Activated naive CD4-positive, alpha-beta T cell treated with anti-CD3 and anti-CD28 coated beads for 36 hours (primary cell): ENCODE measurements at regions of chr12 and their contacts with region 1.

Region 1: DNA sequence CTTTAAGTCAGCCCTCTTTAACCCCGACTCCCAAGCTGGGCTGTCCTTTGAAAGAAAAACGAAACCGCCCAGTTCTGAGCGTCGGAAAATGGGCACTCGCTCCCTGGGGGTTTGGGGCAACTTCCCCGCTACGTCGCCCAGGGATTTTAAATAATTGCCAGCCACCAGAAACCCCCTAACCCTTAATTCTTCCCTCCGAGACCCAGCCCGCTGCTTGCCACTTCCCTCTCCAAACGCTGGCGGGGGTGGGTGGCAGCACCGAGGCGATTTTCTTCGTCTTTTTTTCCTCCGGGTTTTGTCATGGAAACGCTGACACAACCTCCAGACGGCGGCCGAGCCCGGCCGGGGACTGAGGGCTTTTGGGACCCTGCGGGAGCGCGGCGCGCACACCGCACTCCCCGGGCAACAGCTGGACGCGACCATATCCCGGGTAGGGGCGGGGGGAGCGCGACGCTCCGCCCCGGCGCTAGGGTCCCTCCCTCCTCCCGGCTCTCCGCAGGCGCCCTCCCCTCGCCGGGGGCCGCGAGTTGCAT is at the start of gene CHST11:
- DNase-seq: peak; percentile 86
- H3K4me3 Mint-ChIP-seq: peak within 1 kb of the TSS; percentile 97
- H3K27ac Mint-ChIP-seq: peak within 1 kb of the TSS; percentile 94
- H3K4me1 Mint-ChIP-seq: peaks cover 28% of the 10 kb centered on the region
- H3K27me3 Mint-ChIP-seq: peaks cover 2% of the 10 kb centered on the region
- total RNA-seq, gene CHST11: 39.3 to 45.3 TPM

Region 2: DNA sequence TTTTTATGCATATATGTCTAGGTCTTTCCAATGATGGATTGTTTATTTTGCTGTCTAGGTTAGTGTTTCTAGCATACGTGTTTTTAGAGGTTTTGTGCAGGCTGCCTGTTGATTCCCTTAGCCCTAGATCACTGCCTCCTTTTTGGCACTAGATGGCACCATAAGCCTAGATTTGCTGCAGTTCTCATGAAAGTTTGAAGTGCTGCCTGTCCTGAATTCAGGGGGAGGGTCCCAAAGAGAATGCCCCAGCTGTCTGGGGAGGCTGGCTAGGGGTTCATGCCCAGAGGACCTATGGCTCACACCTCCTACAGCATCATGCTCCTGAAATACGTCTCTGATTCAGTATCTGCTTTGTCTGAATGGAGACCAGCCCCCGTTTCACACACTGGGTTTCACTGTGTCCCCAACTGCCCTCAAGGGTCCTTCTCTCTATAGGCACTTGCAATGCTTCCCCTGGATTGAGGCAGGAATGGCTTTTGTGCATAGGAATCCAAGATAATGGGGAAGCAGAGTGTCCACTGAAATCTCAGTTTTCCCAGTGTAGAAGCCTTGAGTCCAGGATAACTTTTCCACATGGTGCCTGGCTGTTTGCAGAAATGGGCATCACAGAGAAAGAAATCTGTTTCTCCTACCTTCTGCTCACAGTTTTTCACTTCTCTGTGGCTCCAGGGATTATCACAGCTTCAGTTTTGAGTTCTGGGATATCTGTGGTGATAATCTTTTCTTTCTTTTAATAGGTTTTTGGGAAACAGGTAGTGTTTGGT is 255.1 kb before region 1 on chr12:
- CTCF ChIA-PET with region 1: no interaction called
- intact Hi-C with region 1: no loop called
- DNase-seq: peak; percentile 64
- H3K4me3 Mint-ChIP-seq: no peak overlapping the region
- H3K27ac Mint-ChIP-seq: no peak overlapping the region
- H3K4me1 Mint-ChIP-seq: peaks cover 2% of the 10 kb centered on the region
- H3K27me3 Mint-ChIP-seq: peaks cover 7% of the 10 kb centered on the region

Region 3: GRCh38 chr12:104215638-104216297 is 240.7 kb before region 1 on chr12 and contains the start of gene TXNRD1:
- CTCF ChIA-PET with region 1: interaction called, 3 read pairs
- intact Hi-C with region 1: loop called (anchors 5 kb)
- DNase-seq: peak; percentile 88
- H3K4me3 Mint-ChIP-seq: peak within 1 kb of the TSS; percentile 65
- H3K27ac Mint-ChIP-seq: no peak within 1 kb of the TSS
- H3K4me1 Mint-ChIP-seq: peaks cover 39% of the 10 kb centered on the region
- H3K27me3 Mint-ChIP-seq: no peaks in the 10 kb centered on the region
- total RNA-seq, gene TXNRD1: 86.0 to 86.9 TPM

Region 4: GRCh38 chr12:104494137-104494792 is 37.8 kb after region 1 on chr12:
- CTCF ChIA-PET with region 1: interaction called, 3 read pairs
- intact Hi-C with region 1: loop called (anchors 1 kb)
- DNase-seq: peak; percentile 85
- H3K4me3 Mint-ChIP-seq: peak overlapping the region; percentile 52
- H3K27ac Mint-ChIP-seq: peak overlapping the region; percentile 70
- H3K4me1 Mint-ChIP-seq: peaks cover 82% of the 10 kb centered on the region
- H3K27me3 Mint-ChIP-seq: no peaks in the 10 kb centered on the region

Region 5: DNA sequence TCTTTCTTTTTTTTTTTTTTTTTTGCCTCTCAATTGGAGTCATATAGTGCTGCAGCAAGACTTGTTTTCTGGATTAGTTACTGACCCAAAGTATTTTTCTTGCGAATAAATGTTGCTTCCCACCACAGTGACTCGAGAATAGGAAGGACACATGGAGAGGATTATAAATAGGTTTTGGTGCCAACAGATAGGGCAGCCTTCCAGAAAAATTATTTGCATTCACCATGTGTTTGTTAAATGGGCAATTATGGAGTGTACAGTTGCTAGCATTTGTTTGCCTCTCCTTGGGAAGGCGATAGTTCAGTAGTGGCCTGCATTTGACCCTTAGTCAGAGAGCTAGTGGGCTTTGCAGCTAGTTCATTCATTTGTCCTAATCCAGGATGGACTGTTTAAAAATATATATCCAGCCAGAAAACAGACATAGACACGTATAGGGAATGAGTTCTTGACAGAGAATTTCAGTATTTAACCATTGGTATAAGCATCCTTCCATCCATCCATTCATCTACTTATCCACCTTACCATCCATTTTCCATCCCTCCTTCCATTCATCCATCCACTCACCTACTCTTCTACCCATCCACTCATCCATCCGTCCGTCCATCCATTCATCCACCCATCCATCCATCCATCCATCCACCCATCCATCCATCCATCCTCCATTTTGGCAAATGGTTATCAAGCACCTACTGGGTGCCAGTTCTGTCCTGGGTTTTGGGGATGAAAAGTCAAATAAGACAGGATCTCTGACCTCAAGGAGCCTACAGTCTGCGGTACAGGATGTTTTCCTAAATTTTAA is 67.8 kb after region 1 on chr12:
- CTCF ChIA-PET with region 1: no interaction called
- intact Hi-C with region 1: no loop called
- DNase-seq: no peak
- H3K4me3 Mint-ChIP-seq: no peak overlapping the region
- H3K27ac Mint-ChIP-seq: no peak overlapping the region
- H3K4me1 Mint-ChIP-seq: peaks cover 41% of the 10 kb centered on the region
- H3K27me3 Mint-ChIP-seq: no peaks in the 10 kb centered on the region

Region 6: GRCh38 chr12:104604070-104604994 is 147.8 kb after region 1 on chr12:
- CTCF ChIA-PET with region 1: interaction called, 3 read pairs
- intact Hi-C with region 1: loop called (anchors 1 kb)
- DNase-seq: peak; percentile 60
- H3K4me3 Mint-ChIP-seq: no peak overlapping the region
- H3K27ac Mint-ChIP-seq: peak overlapping the region; percentile 58
- H3K4me1 Mint-ChIP-seq: peaks cover 27% of the 10 kb centered on the region
- H3K27me3 Mint-ChIP-seq: no peaks in the 10 kb centered on the region

Region 7: DNA sequence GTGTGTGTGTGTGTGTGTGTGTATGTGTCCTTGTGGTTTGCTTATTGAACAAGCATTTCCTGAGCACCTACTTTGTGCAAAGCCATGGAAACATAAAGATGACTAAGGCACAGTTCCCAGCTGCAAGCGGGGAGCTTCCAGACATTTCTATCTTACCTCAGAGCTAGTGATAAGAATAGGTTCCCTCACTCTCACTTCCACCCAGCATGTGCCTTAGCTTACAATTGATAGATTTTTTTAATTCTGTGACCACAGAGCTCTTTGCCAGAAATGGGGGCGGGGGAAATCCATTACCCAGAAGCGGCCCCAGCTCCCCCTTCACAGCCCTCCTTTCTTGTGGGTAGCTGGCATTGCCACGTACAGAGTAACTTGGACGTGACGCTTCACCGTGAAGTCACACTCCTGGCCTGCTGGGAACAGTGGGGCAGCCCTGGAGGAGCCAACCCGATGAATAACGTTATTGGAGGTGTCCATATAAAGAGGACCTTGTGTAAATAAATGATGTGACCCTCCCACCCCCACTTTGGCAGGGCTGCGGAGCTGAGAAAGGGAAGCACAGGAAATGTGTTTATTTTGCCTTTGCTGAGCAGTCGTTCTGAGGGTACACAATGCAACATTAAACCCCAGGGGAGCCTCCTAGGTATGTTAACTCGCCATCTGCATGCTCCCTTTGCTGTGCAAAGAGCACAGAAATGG is 239.1 kb after region 1 on chr12:
- CTCF ChIA-PET with region 1: interaction called, 4 read pairs
- intact Hi-C with region 1: loop called (anchors 1 kb)
- DNase-seq: peak; percentile 97
- H3K4me3 Mint-ChIP-seq: peak overlapping the region; percentile 37
- H3K27ac Mint-ChIP-seq: peak overlapping the region; percentile 93
- H3K4me1 Mint-ChIP-seq: peaks cover 61% of the 10 kb centered on the region
- H3K27me3 Mint-ChIP-seq: no peaks in the 10 kb centered on the region

Region 8: DNA sequence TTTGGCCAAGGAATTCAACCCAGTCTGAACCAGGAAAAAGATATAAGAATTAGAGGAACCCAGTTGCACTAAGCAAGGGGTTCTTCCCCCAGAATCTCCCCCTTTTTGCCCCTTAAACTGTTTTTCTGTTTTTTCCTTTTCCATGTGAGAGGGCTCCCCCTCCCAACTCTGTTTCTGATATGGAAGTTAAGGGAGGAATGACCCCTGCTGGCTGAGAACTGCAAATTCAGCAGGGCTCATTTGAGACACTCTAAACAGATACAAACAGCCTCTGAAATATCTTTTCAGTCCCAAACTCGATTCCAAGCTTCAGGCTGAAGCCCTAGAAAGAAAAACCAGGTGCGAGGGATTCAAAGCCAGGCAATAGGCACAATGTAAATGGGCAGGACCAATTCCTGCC is 368.9 kb after region 1 on chr12:
- CTCF ChIA-PET with region 1: no interaction called
- intact Hi-C with region 1: loop called (anchors 5 kb)
- DNase-seq: peak; percentile 32
- H3K4me3 Mint-ChIP-seq: no peak overlapping the region
- H3K27ac Mint-ChIP-seq: no peak overlapping the region
- H3K4me1 Mint-ChIP-seq: peaks cover 6% of the 10 kb centered on the region
- H3K27me3 Mint-ChIP-seq: no peaks in the 10 kb centered on the region

Region 9: DNA sequence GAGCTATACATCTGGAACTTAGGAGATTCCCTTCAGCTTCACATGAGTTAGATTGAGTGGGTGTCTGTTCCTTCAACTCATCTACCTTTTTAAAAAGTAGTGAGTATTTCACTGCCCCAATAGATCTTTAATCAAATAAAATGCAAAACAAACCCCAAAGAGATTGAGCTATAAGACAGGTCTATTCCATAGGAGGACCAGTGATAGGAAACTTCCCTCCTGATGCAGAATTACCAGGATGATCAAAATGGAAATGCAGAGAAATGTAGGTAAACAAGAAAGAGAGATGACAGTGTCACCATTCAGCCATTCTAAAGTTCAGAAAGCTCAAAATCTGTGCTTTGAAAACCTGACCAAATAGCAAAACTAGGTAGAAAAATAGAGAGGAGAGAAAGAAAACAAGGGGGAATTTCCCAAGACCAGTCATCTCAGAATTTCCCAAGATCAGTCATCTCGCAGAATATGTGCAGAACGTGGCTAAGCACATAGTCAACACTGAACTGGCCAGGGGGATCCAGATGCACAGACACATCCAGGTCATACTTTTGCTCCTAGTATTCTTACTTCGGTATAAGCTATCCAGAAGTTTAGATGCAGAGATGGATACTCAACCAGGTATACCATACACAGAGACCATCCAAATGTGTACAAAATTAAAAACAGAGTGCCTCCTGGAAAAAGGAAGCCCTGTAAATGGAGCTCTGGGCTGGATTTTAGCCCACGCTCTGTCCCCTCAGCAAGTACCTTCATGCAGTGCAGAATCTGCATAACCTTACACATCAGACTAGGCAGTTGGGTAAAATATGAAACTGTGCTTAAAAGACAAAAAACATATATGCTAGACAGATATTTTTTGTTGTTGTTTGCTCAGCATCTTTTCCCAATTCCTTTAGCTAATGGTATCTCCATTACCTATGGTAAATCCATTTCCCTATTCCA is 474.2 kb after region 1 on chr12:
- CTCF ChIA-PET with region 1: no interaction called
- intact Hi-C with region 1: loop called (anchors 2 kb)
- DNase-seq: peak; percentile 76
- H3K4me3 Mint-ChIP-seq: no peak overlapping the region
- H3K27ac Mint-ChIP-seq: peak overlapping the region; percentile 0
- H3K4me1 Mint-ChIP-seq: peaks cover 23% of the 10 kb centered on the region
- H3K27me3 Mint-ChIP-seq: no peaks in the 10 kb centered on the region